IMR-90 (cell line): ENCODE measurements at regions of chr19 and their contacts with region 1.

Region 1: GRCh38 chr19:56170261-56170660 is 5.5 kb upstream of the GALP start:
- DNase-seq: peak; percentile 43
- ATAC-seq: no peak
- H3K4me3 ChIP-seq: no peak overlapping the region
- H3K27ac ChIP-seq: no peak overlapping the region
- H3K4me1 ChIP-seq: no peaks in the 10 kb centered on the region
- H3K27me3 ChIP-seq: peaks cover 4% of the 10 kb centered on the region; the same call in 1 of the 2 replicates
- CTCF ChIP-seq: no peak
- POLR2A ChIP-seq: no peak
- RAD21 ChIP-seq: no peak

Region 2: GRCh38 chr19:56140583-56141416 is 29.5 kb before region 1 on chr19 and contains the start of gene ZNF444:
- CTCF ChIA-PET with region 1: no interaction called
- POLR2A ChIA-PET with region 1: no interaction called
- dilution Hi-C with region 1: no loop called
- in situ Hi-C with region 1: no loop called
- intact Hi-C with region 1: no loop called
- DNase-seq: peak; percentile 99
- ATAC-seq: peak; percentile 93
- H3K4me3 ChIP-seq: peak within 1 kb of the TSS; percentile 38
- H3K27ac ChIP-seq: peak within 1 kb of the TSS; percentile 73
- H3K4me1 ChIP-seq: no peaks in the 10 kb centered on the region; the same call in 1 of the 2 replicates
- H3K27me3 ChIP-seq: no peaks in the 10 kb centered on the region
- CTCF ChIP-seq: no peak
- POLR2A ChIP-seq: peak; percentile 63; the same call in 1 of the 2 replicates
- RAD21 ChIP-seq: no peak
- total RNA-seq, gene ZNF444: 2.5 and 3.3 TPM in 2 replicates

Region 3: GRCh38 chr19:56314562-56315077 is 144.4 kb after region 1 on chr19 and contains the start of gene ZSCAN5A:
- CTCF ChIA-PET with region 1: interaction called, 7 read pairs
- POLR2A ChIA-PET with region 1: no interaction called
- dilution Hi-C with region 1: no loop called
- in situ Hi-C with region 1: no loop called
- intact Hi-C with region 1: loop called (anchors 10 kb)
- DNase-seq: peak; percentile 91
- ATAC-seq: peak; percentile 88
- H3K4me3 ChIP-seq: peak within 1 kb of the TSS; percentile 55
- H3K27ac ChIP-seq: peak within 1 kb of the TSS; percentile 87
- H3K4me1 ChIP-seq: no peaks in the 10 kb centered on the region
- H3K27me3 ChIP-seq: no peaks in the 10 kb centered on the region
- CTCF ChIP-seq: no peak
- POLR2A ChIP-seq: peak; percentile 91
- RAD21 ChIP-seq: no peak
- total RNA-seq, gene ZSCAN5A: 3.6 and 4.3 TPM in 2 replicates